ENCODE measurements at regions of chrX and their contacts with region 1.

Region 1: DNA sequence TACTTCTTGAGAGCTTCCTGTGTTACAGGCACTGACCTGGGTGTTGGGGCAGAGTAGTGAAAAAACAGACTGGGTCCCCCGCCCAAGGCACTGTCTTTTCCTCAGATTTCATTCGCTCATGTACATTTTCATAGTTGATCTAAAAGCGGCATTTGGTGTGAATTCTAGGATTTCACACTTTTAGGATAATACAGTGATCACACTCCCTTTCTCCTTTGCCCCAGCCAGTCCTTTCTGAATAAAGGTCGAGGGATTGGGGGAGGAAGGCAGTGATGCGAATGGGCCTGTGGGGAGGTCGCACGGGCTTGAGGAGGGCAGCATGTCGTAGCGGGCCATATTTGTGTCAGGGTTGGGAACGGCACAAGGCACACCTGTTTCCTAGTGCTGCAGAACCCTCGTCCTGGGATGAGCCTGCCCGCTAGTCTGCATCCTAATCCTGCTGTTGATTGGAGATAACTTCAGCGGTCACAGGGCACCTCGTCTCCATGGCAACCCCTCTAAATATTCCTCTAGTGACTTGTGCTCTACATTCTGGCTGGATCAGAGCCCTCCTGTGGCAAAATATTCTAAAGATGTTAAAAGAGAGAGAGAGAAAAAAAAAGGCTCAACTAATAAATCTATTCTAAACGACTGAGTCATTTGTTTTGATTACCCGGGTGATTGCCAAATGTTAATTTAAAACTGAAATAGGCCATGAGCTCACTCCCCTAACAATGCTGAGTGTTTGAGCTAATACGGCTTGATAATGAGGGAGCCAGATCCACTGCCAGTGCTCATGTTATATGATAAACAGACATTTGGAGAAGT is 21.8 kb downstream of the FHL1 start:
- DNase-seq: peak; percentile 37 to 64
- ATAC-seq: peak; percentile 62 to 78 (median 70)
- H3K4me3 ChIP-seq: peak overlapping the region; percentile 52
- H3K27ac ChIP-seq: peak overlapping the region; percentile 95
- H3K4me1 ChIP-seq: peaks cover 15% of the 10 kb centered on the region
- H3K27me3 ChIP-seq: peaks cover 0 to 8% (median 0%) of the 10 kb centered on the region in 3 donors
- CTCF ChIP-seq: no peak

Region 2: GRCh38 chrX:136015016-136015415 is 154.1 kb before region 1 on chrX:
- intact Hi-C with region 1: no loop called
- DNase-seq: no peak
- ATAC-seq: no peak
- H3K4me3 ChIP-seq: no peak overlapping the region
- H3K27ac ChIP-seq: no peak overlapping the region
- H3K4me1 ChIP-seq: no peaks in the 10 kb centered on the region
- H3K27me3 ChIP-seq: no peaks in the 10 kb centered on the region
- CTCF ChIP-seq: no peak

Region 3: DNA sequence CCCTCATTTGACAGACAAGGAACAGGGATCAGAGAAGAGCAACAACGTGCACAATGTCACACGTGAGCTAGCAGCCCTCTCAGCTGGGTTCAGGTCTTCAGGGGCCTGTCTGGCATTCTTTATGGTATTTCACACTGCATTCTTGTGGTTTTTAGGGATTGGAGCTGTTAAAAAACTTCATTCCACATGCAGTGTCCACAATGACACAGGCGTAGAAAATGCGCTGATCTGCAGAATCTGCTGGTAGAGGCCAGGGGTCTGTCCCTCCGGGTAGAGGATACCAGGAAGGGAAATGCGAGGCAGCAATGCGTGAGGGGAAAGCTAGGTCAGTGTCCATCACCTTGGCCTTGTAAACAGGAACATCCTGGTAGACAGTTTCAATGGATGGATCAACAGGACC is 45.4 kb after region 1 on chrX:
- intact Hi-C with region 1: loop called in 1 of 2 experiments (anchors 5 kb)
- DNase-seq: no peak
- ATAC-seq: peak; percentile 1 to 5 (median 3)
- H3K4me3 ChIP-seq: no peak overlapping the region
- H3K27ac ChIP-seq: peak overlapping the region; percentile 53
- H3K4me1 ChIP-seq: no peaks in the 10 kb centered on the region
- H3K27me3 ChIP-seq: no peaks in the 10 kb centered on the region
- CTCF ChIP-seq: no peak

Region 4: GRCh38 chrX:136268051-136269048 is 99.2 kb after region 1 on chrX:
- intact Hi-C with region 1: loop called in 1 of 2 experiments (anchors 2 kb)
- DNase-seq: no peak
- ATAC-seq: peak; percentile 52 to 76 (median 62)
- H3K4me3 ChIP-seq: no peak overlapping the region
- H3K27ac ChIP-seq: no peak overlapping the region
- H3K4me1 ChIP-seq: no peaks in the 10 kb centered on the region
- H3K27me3 ChIP-seq: no peaks in the 10 kb centered on the region
- CTCF ChIP-seq: peak; percentile 82

Region 5: GRCh38 chrX:136496770-136497598 is 327.9 kb after region 1 on chrX and contains the start of gene HTATSF1:
- intact Hi-C with region 1: loop called in 1 of 2 experiments (anchors 5 kb)
- DNase-seq: peak; percentile 84 to 91
- ATAC-seq: peak; percentile 91 to 94 (median 92)
- H3K4me3 ChIP-seq: peak within 1 kb of the TSS; percentile 75
- H3K27ac ChIP-seq: peak within 1 kb of the TSS; percentile 90
- H3K4me1 ChIP-seq: peaks cover 6% of the 10 kb centered on the region
- H3K27me3 ChIP-seq: peaks cover 0 to 6% (median 0%) of the 10 kb centered on the region in 3 donors
- CTCF ChIP-seq: no peak
- total RNA-seq, gene HTATSF1: 63.2 to 95.2 (median 74.1) TPM

Region 6: DNA sequence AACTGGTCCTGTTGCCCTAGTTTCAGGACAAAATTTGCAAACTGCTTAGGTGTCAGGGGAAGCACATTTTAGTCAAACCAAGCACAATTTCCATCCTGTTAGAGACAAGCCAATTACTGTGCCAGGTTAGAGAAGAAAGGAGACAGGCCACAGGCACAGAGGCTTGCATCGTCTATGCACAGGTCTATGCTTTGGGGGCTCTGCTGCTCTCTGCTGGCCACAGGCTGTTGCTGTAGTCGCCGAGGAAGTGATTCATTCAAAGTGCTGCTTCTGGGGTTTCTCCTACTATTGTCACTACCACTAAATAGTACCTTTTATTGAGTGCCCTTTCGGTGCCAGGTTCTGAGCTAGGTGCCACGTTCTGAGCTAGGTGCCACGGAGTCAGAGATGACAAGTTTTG is 408.4 kb after region 1 on chrX:
- intact Hi-C with region 1: loop called in 1 of 2 experiments (anchors 5 kb)
- DNase-seq: peak; percentile 42 to 74
- ATAC-seq: peak; percentile 69 to 88 (median 86)
- H3K4me3 ChIP-seq: no peak overlapping the region
- H3K27ac ChIP-seq: no peak overlapping the region
- H3K4me1 ChIP-seq: no peaks in the 10 kb centered on the region
- H3K27me3 ChIP-seq: peaks cover 0 to 9% (median 0%) of the 10 kb centered on the region in 3 donors
- CTCF ChIP-seq: peak; percentile 65

Region 7: DNA sequence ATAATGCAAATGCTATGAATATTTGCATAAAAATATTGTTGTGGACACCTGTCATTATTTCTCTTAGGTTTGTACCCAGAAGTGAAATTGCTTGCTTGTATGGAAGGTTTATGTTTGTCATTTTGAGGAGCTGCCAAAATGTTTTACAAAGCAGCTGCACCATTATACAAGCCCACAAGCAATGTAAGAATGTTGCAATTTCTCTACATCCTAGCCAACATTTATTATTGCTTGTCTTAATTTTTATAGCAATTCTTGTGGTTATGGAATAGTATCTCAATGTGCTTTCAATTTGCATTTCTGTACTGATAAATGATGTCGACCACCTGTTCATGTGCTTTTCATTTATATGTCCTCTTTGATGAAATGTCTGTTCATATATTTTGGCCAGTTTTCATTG is 730.1 kb after region 1 on chrX:
- intact Hi-C with region 1: no loop called
- DNase-seq: no peak
- ATAC-seq: no peak
- H3K4me3 ChIP-seq: no peak overlapping the region
- H3K27ac ChIP-seq: no peak overlapping the region
- H3K4me1 ChIP-seq: no peaks in the 10 kb centered on the region
- H3K27me3 ChIP-seq: no peaks in the 10 kb centered on the region
- CTCF ChIP-seq: no peak

Measured in psoas muscle (tissue), 8 donors.